ENCODE measurements at regions of chrX and their contacts with region 1.

Region 1: DNA sequence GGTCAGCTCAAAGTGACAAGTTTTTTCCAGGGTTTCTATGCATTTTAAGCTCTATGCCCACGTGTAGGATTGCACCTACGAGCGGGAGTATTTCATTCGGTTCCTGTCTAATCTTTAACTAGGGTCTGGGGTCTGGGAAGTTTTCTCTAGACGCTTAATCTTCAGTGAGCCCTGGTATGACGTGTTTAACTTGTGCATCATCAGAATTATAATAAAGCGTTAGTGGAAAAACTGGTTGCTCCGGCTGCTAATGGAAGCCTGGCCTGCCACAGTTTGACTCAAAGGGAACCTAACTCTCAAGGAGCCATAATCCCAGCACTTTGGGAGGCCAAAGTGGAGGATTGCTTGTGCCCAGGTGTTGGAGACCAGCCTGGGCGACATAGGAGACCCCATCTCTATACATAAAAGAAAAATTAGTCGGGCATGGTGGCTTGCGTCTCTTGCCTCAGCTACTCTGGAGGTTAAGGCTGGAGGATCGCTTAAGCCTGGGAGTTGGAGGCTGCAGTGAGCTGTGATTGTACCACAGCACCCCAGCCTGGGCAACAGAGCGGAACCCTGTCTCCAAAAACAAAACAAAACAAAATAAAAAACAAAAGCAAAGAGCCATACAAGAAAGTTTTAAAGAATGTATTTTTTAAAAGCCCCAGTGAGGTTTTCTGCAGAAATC is 30.2 kb downstream of the ARSD start:
- DNase-seq: no peak
- ATAC-seq: no peak
- H3K4me3 ChIP-seq: no peak overlapping the region
- H3K4me3 Mint-ChIP-seq: peak overlapping the region; percentile 81
- H3K27ac ChIP-seq: peak overlapping the region; percentile 7
- H3K27ac Mint-ChIP-seq: peak overlapping the region; percentile 84 to 91
- H3K4me1 ChIP-seq: peaks cover 24% of the 10 kb centered on the region
- H3K4me1 Mint-ChIP-seq: peaks cover 22 to 28% of the 10 kb centered on the region in 2 donors
- H3K27me3 ChIP-seq: no peaks in the 10 kb centered on the region
- H3K27me3 Mint-ChIP-seq: no peaks in the 10 kb centered on the region
- CTCF ChIP-seq: no peak

Region 2: DNA sequence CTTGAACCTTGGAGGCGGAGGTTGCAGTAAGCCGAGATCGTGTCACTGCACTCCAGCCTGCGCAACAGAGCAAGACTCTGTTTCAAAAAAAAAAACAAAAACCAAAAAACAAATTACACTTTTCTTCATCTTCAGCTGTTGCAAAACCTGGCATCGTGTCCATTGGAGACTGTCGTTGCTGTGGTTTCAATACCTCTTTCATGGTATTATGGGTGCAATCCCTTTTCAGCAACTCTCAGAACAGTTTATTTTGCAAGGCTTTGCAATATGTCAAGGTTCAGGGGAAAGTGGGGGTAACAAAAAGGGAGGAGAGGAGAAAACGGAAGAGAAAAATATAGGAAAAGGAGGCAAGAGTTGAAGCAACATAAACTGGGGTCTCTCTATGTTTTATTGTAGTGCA is 10.7 kb before region 1 on chrX:
- intact Hi-C with region 1: no loop called
- DNase-seq: no peak
- ATAC-seq: no peak
- H3K4me3 ChIP-seq: no peak overlapping the region
- H3K4me3 Mint-ChIP-seq: peak overlapping the region; percentile 91
- H3K27ac ChIP-seq: no peak overlapping the region
- H3K27ac Mint-ChIP-seq: peak overlapping the region in 1 of 2 donors; percentile 79
- H3K4me1 ChIP-seq: peaks cover 5% of the 10 kb centered on the region
- H3K4me1 Mint-ChIP-seq: peaks cover 21 to 23% of the 10 kb centered on the region in 2 donors
- H3K27me3 ChIP-seq: no peaks in the 10 kb centered on the region
- H3K27me3 Mint-ChIP-seq: no peaks in the 10 kb centered on the region
- CTCF ChIP-seq: no peak

Region 3: DNA sequence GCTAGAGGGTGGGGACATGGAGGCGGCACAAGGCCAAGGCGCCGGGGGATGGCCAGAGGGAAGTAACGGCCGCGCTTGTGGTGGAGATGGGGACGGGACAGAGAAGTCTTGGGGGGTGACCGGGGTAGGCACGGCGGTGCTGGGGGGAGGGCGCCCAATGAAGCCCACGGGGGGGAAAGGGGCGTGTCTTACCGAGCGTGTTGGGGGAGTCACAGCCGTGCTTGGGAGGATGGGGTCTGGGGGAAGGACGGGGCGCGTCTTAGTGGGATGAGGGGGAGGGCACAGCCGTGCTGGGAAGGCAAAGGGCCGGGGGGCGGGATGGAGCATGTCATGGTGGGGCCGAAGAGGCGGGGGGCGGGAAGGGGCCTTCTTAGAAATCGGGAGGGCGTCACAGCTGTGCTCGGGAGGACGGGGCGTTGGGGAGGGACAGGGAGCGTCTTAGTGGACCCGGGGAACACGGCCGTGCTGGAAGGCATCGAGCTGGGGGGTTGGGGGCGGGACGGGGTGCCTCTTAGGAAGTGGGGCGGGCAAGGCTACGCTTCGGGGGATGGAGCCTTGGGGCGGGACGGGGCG is 29.3 kb after region 1 on chrX:
- intact Hi-C with region 1: loop called (anchors 1 kb)
- DNase-seq: peak in 1 of 2 donors; percentile 10
- ATAC-seq: peak in 2 of 3 donors; percentile 8 to 10
- H3K4me3 ChIP-seq: peak overlapping the region; percentile 77
- H3K4me3 Mint-ChIP-seq: peak overlapping the region; percentile 87
- H3K27ac ChIP-seq: peak overlapping the region; percentile 35
- H3K27ac Mint-ChIP-seq: peak overlapping the region; percentile 57 to 80
- H3K4me1 ChIP-seq: peaks cover 6% of the 10 kb centered on the region
- H3K4me1 Mint-ChIP-seq: peaks cover 0 to 6% of the 10 kb centered on the region in 2 donors
- H3K27me3 ChIP-seq: no peaks in the 10 kb centered on the region
- H3K27me3 Mint-ChIP-seq: no peaks in the 10 kb centered on the region
- CTCF ChIP-seq: no peak

Measured in natural killer cell (primary cell).